ENCODE measurements at regions of chr10 and their contacts with region 1.

Region 1: GRCh38 chr10:36771725-36772124 is 353.7 kb upstream of the ANKRD30A start:
- DNase-seq: no peak
- H3K4me3 ChIP-seq: no peak overlapping the region
- H3K27ac ChIP-seq: no peak overlapping the region
- H3K4me1 ChIP-seq: no peaks in the 10 kb centered on the region
- H3K27me3 ChIP-seq: peaks cover 8% of the 10 kb centered on the region; the same call in 1 of the 2 replicates
- CTCF ChIP-seq: no peak

Region 2: DNA sequence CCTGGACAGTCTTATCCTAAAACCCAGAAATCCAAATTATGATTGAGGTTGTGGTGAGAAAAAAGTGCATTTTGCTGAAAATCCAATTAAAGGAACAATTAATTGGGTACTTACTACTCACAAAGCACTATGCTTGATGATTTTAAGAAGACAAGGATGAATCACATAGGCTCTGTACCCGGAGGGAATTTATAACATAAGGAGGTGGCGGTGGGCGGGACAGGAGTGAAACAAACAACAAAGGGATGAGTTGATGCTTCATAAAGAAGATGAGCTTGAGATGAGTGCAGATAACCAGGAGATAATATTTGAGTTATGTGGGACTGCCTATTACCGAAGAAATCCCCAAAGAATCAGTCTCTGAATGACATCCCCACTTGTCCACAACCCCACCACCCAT is 958.5 kb before region 1 on chr10:
- CTCF ChIA-PET with region 1: interaction called, 17 read pairs
- POLR2A ChIA-PET with region 1: no interaction called
- intact Hi-C with region 1: no loop called
- DNase-seq: no peak
- H3K4me3 ChIP-seq: no peak overlapping the region
- H3K27ac ChIP-seq: no peak overlapping the region
- H3K4me1 ChIP-seq: no peaks in the 10 kb centered on the region
- H3K27me3 ChIP-seq: peaks cover 3% of the 10 kb centered on the region; the same call in 1 of the 2 replicates
- CTCF ChIP-seq: no peak

Region 3: DNA sequence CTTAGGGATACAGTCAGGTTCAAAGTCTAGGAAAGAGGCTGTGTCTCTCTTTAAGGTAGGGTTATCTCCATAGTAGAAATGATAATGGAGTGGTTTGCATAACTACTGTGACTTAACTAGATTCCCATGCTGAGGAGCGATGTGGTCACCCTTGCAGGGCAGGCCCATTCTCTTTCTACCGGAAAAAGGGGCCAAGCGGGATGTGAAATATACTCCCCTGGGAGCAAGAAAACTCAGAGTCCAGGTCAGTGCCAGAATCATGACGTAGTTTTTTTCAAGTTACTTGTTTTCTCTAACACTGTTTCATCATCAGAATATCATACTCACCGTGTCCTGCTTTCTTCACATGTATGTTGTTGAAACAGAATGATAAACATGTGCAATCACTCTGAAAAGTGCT is 295.3 kb before region 1 on chr10:
- CTCF ChIA-PET with region 1: no interaction called
- POLR2A ChIA-PET with region 1: no interaction called
- intact Hi-C with region 1: no loop called
- DNase-seq: no peak
- H3K4me3 ChIP-seq: no peak overlapping the region
- H3K27ac ChIP-seq: no peak overlapping the region
- H3K4me1 ChIP-seq: no peaks in the 10 kb centered on the region
- H3K27me3 ChIP-seq: no peaks in the 10 kb centered on the region
- CTCF ChIP-seq: no peak

Region 4: GRCh38 chr10:36608251-36608650 is 163.5 kb before region 1 on chr10:
- CTCF ChIA-PET with region 1: no interaction called
- POLR2A ChIA-PET with region 1: no interaction called
- intact Hi-C with region 1: no loop called
- DNase-seq: no peak
- H3K4me3 ChIP-seq: no peak overlapping the region
- H3K27ac ChIP-seq: no peak overlapping the region
- H3K4me1 ChIP-seq: no peaks in the 10 kb centered on the region
- H3K27me3 ChIP-seq: no peaks in the 10 kb centered on the region; the same call in 1 of the 2 replicates
- CTCF ChIP-seq: no peak